H1 (cell line): ENCODE measurements at regions of chr1 and their contacts with region 1.

Region 1: DNA sequence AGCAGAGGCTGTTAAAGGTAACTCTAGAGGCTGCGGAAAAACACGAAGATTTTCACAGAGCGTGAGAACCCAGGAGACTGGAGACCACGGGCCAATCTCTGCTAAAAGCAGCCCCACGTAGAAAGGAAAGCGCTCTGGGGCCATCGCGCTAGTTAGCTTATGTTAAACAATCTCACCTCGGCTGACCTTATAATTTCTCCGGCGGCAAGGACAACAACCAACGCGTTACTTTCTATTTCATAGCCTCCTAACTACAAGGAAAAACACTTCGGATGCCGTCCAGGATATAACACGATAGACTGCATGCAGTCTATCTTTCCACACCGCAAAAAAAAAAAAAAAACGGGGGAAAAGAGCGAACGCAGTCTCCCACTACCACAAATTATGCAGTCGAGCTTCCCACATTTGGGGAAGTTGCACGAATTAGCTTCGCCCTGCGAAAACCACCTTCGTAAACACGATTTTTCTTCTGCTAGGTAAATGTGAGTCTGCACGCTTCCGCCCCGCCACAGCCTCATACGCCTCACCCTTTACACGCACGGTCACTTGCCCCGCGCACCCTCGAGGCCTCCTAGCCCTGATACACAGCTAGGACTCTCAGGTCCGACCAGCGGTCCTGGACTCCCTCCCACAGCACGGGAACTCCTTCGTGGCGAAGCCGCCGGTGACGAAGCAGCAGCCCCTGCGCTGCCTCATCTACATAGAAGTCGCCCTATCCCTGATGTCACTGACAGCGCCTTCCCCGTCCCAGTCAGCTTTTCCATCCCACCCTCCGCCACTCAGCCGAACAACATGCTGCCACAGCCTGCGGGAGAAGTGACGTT is 87.8 kb downstream of the PRKAB2 start:
- DNase-seq: peak; percentile 81 to 85
- H3K4me3 ChIP-seq: peak overlapping the region; percentile 74 to 95 (median 88)
- H3K27ac ChIP-seq: peak overlapping the region; percentile 100
- H3K4me1 ChIP-seq: peaks cover 3 to 20% (median 12%) of the 10 kb centered on the region in 4 experiments; a peak in 6 of 7 replicates
- H3K27me3 ChIP-seq: peaks cover 21 to 62% (median 48%) of the 10 kb centered on the region in 4 experiments
- CTCF ChIP-seq: no peak
- EP300 ChIP-seq: no peak; a peak in 1 of 3 replicates
- POLR2A ChIP-seq: peak; percentile 100
- RAD21 ChIP-seq: no peak

Region 2: DNA sequence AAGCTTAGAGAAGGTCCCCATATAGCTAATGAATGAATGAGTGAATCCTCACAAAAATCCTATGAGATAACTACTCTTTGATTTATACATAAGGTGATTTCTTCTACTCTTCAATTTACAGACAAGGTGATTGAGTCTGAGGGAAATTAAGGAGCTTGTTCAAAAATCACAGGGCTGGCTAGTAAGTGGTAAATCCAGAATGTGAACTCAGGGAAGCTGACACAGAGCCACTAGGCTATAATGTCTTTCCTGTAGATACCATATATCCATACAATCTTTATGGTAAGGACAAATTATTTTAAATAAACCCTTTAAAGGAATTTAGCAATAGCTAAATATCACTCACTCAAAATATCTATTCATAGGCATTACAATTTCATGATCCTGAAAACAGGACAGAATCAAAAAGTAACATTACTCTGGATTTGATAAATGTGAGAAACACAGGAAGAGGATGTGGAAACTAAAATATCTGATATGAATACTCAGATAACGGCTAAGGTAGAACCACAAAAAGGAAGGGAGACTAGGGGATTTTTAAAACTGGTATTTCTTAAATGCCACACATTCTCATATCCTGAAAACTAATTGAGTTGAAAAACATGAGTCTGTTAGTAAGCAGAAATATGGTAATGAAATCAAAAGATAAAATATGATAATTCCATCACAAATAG is 38.2 kb before region 1 on chr1:
- CTCF ChIA-PET with region 1: no interaction called
- POLR2A ChIA-PET with region 1: interaction called, 22 read pairs
- DNase-seq: no peak
- H3K4me3 ChIP-seq: no peak overlapping the region
- H3K27ac ChIP-seq: no peak overlapping the region
- H3K4me1 ChIP-seq: no peaks in the 10 kb centered on the region
- H3K27me3 ChIP-seq: no peaks in the 10 kb centered on the region
- CTCF ChIP-seq: no peak
- EP300 ChIP-seq: no peak
- POLR2A ChIP-seq: no peak
- RAD21 ChIP-seq: no peak

Region 3: GRCh38 chr1:147072370-147073061 is 12.0 kb before region 1 on chr1:
- CTCF ChIA-PET with region 1: interaction called, 3 read pairs
- POLR2A ChIA-PET with region 1: interaction called, 62 read pairs
- DNase-seq: peak in 1 of 2 experiments; percentile 71
- H3K4me3 ChIP-seq: peak overlapping the region; percentile 47 to 66 (median 50)
- H3K27ac ChIP-seq: no peak overlapping the region
- H3K4me1 ChIP-seq: peaks cover 0 to 4% (median 2%) of the 10 kb centered on the region in 4 experiments; a peak in 5 of 7 replicates
- H3K27me3 ChIP-seq: peaks cover 45 to 71% (median 62%) of the 10 kb centered on the region in 4 experiments
- CTCF ChIP-seq: no peak
- EP300 ChIP-seq: no peak
- POLR2A ChIP-seq: no peak
- RAD21 ChIP-seq: no peak

Region 4: GRCh38 chr1:147115496-147115895 is 31.0 kb after region 1 on chr1:
- CTCF ChIA-PET with region 1: no interaction called
- POLR2A ChIA-PET with region 1: interaction called, 19 read pairs
- DNase-seq: no peak
- H3K4me3 ChIP-seq: no peak overlapping the region
- H3K27ac ChIP-seq: no peak overlapping the region
- H3K4me1 ChIP-seq: no peaks in the 10 kb centered on the region
- H3K27me3 ChIP-seq: no peaks in the 10 kb centered on the region
- CTCF ChIP-seq: no peak
- EP300 ChIP-seq: no peak
- POLR2A ChIP-seq: no peak
- RAD21 ChIP-seq: no peak

Region 5: GRCh38 chr1:147172168-147172992 is 87.9 kb after region 1 on chr1 and contains the start of gene PRKAB2:
- CTCF ChIA-PET with region 1: no interaction called
- POLR2A ChIA-PET with region 1: interaction called, 48 read pairs
- DNase-seq: peak; percentile 89 to 98
- H3K4me3 ChIP-seq: peak within 1 kb of the TSS; percentile 74 to 96 (median 88)
- H3K27ac ChIP-seq: peak within 1 kb of the TSS; percentile 75
- H3K4me1 ChIP-seq: peaks cover 2 to 12% (median 10%) of the 10 kb centered on the region in 4 experiments; a peak in 4 of 7 replicates
- H3K27me3 ChIP-seq: no peaks in the 10 kb centered on the region
- CTCF ChIP-seq: peak; percentile 77 to 94 (median 83)
- EP300 ChIP-seq: peak in 1 of 2 experiments; percentile 81; a peak in 1 of 3 replicates
- POLR2A ChIP-seq: peak; percentile 59 to 69; a peak in 2 of 3 replicates
- RAD21 ChIP-seq: peak; percentile 66 to 81
- total RNA-seq, gene PRKAB2: 18.9 and 19.8 TPM in 2 replicates

Region 6: DNA sequence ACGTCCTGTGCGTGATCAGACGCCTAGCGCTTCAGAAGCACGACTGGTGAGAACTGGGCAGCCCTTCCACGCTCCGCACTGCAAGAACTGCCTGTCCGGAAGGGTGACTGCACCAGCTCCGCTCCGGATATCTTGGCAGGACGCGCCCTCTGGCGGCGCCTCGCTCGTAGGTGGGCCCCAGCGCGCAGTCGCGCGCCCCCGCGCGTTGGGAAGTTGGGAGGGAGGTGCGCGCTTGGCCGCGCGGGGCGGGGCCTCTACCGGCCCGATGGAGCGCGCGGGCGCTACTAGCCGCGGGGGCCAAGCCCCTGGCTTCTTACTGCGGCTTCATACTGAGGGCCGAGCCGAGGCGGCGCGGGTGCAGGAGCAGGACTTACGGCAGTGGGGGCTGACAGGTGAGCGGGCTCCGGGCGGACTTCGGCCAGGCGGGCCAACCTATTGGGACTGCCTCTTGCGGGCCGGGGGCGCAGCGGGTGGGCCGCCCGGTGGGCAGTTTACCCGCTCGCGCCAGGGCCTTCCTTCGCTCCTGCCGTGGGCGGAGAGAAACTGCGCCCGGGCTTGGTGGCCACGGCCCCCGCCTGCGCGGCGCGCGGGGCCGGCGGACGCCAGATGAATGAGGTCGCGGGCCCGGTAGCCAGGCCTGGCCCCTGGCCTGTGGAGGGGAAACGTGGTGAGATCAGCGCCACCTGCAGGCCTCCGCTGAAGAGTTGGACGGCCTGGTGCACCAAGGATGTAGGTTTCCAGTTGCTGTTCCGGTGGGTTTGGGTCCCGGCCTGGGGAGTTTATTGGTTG is 158.1 kb after region 1 on chr1 and contains the start of gene CHD1L:
- CTCF ChIA-PET with region 1: interaction called, 3 read pairs
- POLR2A ChIA-PET with region 1: interaction called, 48 read pairs
- DNase-seq: peak; percentile 80 to 93
- H3K4me3 ChIP-seq: peak within 1 kb of the TSS; percentile 53 to 98 (median 85)
- H3K27ac ChIP-seq: peak within 1 kb of the TSS; percentile 76; the same call in 1 of the 2 replicates
- H3K4me1 ChIP-seq: peaks cover 0 to 16% (median 2%) of the 10 kb centered on the region in 4 experiments; a peak in 4 of 7 replicates
- H3K27me3 ChIP-seq: no peaks in the 10 kb centered on the region
- CTCF ChIP-seq: peak; percentile 94 to 100 (median 96)
- EP300 ChIP-seq: no peak; a peak in 1 of 3 replicates
- POLR2A ChIP-seq: peak in 1 of 2 experiments; percentile 73; a peak in 2 of 3 replicates
- RAD21 ChIP-seq: peak; percentile 91 to 97
- total RNA-seq, gene CHD1L: 49.9 and 51.2 TPM in 2 replicates